ENCODE measurements at regions of chr6 and their contacts with region 1.

Region 1: DNA sequence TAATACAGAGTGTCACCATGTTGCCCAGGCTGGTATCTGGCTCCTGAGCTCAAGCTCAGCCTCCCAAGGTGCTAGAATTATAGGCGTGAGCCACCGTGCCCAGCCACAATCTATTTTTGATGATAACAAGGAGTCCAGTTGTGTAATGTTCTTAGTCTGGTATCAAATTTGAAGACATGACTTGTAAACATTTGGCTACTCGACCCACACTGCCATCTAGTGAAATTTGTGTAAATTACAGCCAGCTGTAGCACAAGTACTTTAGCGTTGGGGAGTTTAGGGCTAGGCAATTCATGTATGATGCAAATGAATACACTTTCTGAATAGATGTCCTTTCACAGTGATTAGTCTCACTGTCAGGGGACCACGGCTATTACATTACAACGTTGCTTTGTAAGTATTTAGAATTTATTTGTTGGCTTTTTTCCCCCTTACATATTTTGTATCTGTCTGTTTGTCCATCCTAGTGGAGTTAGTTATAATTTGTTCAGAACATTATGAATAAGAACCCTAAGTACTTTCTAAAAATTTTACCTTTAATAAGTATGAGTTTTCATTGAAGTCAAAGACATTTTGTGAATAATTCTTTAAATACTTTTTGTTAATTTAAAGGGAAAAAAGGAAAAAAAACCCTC is 139.7 kb downstream of the PRDM13 start:
- DNase-seq: peak; percentile 56
- H3K4me3 ChIP-seq: no peak overlapping the region
- H3K27ac ChIP-seq: no peak overlapping the region
- H3K27me3 ChIP-seq: no peaks in the 10 kb centered on the region
- CTCF ChIP-seq: peak; percentile 85

Region 2: DNA sequence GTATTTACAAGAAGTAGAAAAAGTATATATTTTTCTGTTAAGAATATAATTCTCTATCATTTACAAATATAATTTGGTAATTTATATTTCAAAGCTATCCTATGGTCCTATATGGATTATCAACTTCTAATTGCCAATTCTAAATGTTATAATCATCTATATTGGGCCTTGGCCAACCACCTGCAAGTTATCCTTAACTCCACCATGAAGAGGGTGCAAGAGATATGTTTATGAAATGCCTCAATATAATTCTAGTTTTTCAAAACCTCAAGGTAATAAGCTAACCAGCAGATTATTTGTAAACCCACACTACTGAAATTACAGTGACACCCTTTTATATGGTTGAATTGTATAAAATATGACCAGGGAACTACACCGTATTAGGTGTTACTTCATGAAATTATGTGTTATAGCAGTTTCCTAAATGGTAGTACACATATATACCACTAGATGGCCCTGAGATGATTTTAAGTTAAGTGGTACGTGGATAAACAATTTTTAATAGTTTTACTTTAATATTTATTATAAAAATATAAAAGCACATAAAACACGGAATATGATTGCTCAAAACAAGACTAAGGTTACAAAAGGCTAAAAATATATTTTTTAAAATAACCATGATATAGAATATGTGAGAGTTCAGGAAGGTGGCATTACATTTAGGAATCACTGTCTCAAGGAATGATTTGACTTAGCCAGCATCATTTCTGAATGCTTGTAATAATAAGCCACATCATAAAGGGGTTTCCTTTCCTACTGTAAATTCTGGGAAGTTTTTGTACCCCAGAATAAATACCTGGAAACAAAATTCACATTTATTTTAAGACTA is 311.5 kb before region 1 on chr6:
- CTCF ChIA-PET with region 1: interaction called, 19 read pairs
- POLR2A ChIA-PET with region 1: no interaction called
- DNase-seq: no peak
- H3K4me3 ChIP-seq: no peak overlapping the region
- H3K27ac ChIP-seq: no peak overlapping the region
- H3K27me3 ChIP-seq: no peaks in the 10 kb centered on the region
- CTCF ChIP-seq: peak; percentile 66

Region 3: DNA sequence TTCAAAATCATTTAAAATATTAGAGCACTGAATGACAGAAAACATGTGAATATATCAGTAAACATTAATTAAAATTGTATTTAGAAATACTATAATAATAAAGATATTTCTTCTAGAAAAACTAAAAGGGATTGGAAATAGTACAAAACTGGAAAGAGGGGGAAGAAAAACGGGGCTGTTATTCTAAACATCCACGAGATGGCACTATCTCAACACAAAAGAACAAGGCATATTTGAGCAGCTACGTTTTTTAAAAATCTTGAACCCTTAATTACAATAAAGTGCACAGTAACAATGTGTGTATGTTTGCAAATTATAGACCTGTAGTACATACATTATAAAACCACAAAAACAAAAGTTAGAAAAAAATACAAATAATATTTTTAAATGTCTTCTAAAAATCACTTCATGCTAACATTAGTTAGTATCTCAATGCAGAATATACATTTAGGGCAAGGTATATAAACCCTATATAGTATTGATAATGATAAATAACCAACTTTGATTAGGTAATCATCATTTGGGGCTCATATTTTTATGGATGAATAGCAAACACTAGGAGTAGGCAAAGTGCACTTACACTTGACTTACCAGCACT is 278.8 kb before region 1 on chr6:
- CTCF ChIA-PET with region 1: interaction called, 53 read pairs
- POLR2A ChIA-PET with region 1: no interaction called
- DNase-seq: no peak
- H3K4me3 ChIP-seq: no peak overlapping the region
- H3K27ac ChIP-seq: no peak overlapping the region
- H3K27me3 ChIP-seq: no peaks in the 10 kb centered on the region
- CTCF ChIP-seq: peak; percentile 73

Region 4: DNA sequence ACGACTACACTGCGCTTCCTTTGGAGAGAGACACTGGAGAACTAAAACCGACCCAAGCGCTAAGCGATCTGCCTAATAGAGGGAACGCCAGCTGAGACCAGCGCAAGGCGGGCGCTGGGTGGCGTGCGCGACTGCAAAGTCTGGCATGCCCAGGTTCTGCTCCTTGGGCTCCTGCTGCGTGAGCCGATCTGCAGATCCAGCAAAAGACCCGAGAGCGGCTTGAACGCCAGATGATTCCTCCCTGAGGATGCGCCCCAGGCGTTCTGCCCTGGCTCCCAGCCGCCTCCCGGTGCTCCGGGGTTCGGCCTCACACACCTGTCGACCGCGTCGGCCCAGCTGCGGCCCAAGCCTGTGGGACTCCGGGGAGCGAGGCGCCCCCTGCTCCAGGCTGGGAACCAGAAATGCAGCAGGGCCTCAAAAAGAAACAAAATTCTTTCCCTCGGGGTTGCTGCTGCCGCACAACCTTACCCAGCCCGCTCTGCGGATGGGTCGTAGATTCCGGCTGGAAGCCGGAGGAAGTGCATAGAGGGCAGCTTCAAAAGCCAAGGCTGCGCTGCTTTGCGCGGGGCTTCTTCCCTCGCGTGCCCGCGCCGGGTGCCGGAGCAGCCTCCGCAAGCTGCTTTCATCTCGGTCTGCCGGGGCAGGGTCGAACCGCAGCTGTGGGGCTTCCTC is 157.6 kb before region 1 on chr6:
- CTCF ChIA-PET with region 1: interaction called, 18 read pairs
- POLR2A ChIA-PET with region 1: no interaction called
- DNase-seq: peak; percentile 23
- H3K4me3 ChIP-seq: peak overlapping the region; percentile 55
- H3K27ac ChIP-seq: no peak overlapping the region
- H3K27me3 ChIP-seq: peaks cover 57% of the 10 kb centered on the region
- CTCF ChIP-seq: peak; percentile 48